ENCODE measurements at regions of chr5 and their contacts with region 1.

Region 1: DNA sequence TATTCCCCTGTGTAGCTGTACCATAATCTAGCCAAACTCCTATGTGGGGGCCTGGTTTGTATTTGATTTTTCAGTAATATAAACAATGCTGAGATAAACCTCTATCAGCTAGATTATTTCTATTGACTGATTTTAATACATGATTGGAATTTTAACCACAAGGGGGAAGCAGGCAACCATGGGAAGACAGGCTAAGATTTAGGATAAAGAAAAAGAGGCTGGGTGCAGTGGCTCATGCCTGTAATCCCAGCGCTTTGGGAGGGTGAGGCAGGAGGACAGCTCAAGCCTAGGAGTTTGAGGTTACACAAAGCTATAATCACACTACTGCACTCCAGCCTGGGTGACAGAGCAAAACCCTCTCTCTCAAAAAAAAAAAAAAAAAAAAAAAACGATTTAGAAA is 18.1 kb upstream of the GPX3 start:
- DNase-seq: no peak
- H3K4me3 ChIP-seq: no peak overlapping the region
- H3K27ac ChIP-seq: no peak overlapping the region
- H3K4me1 ChIP-seq: peaks cover 10% of the 10 kb centered on the region
- H3K27me3 ChIP-seq: no peaks in the 10 kb centered on the region
- CTCF ChIP-seq: peak; percentile 51 to 82 (median 64)
- POLR2A ChIP-seq: no peak

Region 2: GRCh38 chr5:150778517-150779396 is 223.5 kb before region 1 on chr5 and contains the start of gene SMIM3:
- intact Hi-C with region 1: loop called (anchors 10 kb)
- DNase-seq: peak; percentile 73
- H3K4me3 ChIP-seq: peak within 1 kb of the TSS; percentile 66 to 68
- H3K27ac ChIP-seq: peak within 1 kb of the TSS; percentile 86 to 88
- H3K4me1 ChIP-seq: peaks cover 10% of the 10 kb centered on the region
- H3K27me3 ChIP-seq: no peaks in the 10 kb centered on the region
- CTCF ChIP-seq: peak in 3 of 4 experiments; percentile 23 to 52 (median 43)
- POLR2A ChIP-seq: peak; percentile 72
- total RNA-seq, gene SMIM3: 21.2 to 26.5 TPM

Region 3: GRCh38 chr5:150960791-150961396 is 41.4 kb before region 1 on chr5:
- intact Hi-C with region 1: no loop called
- DNase-seq: no peak
- H3K4me3 ChIP-seq: no peak overlapping the region
- H3K27ac ChIP-seq: no peak overlapping the region
- H3K4me1 ChIP-seq: no peaks in the 10 kb centered on the region
- H3K27me3 ChIP-seq: no peaks in the 10 kb centered on the region
- CTCF ChIP-seq: no peak
- POLR2A ChIP-seq: no peak

Region 4: GRCh38 chr5:151023651-151024050 is 21.4 kb after region 1 on chr5:
- intact Hi-C with region 1: loop called (anchors 2 kb)
- DNase-seq: peak; percentile 75
- H3K4me3 ChIP-seq: no peak overlapping the region
- H3K27ac ChIP-seq: peak overlapping the region; percentile 84 to 86
- H3K4me1 ChIP-seq: peaks cover 16% of the 10 kb centered on the region
- H3K27me3 ChIP-seq: no peaks in the 10 kb centered on the region
- CTCF ChIP-seq: no peak
- POLR2A ChIP-seq: no peak

Region 5: DNA sequence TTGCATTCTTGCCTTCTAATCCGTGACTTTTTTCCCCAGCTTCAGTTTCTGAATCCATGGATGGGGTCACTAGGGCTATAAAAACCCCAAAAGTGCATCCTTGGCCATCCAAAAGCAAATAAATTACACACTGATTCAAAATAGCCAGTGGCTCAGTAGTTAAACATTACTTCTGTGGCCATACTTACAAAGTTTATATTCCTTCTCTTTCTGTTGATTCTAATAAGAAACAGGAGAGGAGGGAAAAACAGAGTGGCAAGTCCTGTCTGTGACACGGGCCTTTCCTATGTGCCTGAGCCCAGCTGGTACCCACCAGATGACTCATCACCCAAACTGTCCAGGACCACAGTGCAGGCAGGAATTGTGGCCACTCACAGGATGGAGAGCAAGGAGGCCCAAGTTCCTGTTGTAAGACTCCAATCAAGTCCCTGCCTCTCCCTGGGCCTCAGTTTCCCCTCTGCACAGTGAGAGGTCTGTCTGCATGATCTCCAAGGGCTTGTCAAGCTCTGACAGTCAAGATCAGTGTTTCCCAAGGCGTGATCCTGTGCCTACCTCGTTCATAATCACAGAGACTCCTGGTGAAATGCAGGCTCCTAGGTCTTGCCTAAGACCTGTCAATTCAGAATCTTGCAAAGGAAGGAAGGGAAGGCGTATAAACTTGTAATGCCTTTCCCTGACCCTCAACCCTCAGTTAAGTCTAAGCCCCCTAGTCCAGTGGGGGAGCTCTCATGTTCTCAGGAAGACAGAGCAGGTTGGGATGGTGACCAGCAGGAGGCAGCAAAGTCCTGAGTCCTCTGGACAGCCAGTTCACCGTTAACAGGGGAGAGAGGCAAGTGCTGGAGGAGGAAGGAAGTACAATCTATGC is 49.0 kb after region 1 on chr5:
- intact Hi-C with region 1: loop called (anchors 2 kb)
- DNase-seq: peak; percentile 68
- H3K4me3 ChIP-seq: no peak overlapping the region
- H3K27ac ChIP-seq: no peak overlapping the region
- H3K4me1 ChIP-seq: no peaks in the 10 kb centered on the region
- H3K27me3 ChIP-seq: no peaks in the 10 kb centered on the region
- CTCF ChIP-seq: peak; percentile 54 to 88 (median 79)
- POLR2A ChIP-seq: no peak

Region 6: GRCh38 chr5:151107738-151108508 is 105.7 kb after region 1 on chr5:
- intact Hi-C with region 1: loop called (anchors 5 kb)
- DNase-seq: peak; percentile 52
- H3K4me3 ChIP-seq: no peak overlapping the region
- H3K27ac ChIP-seq: peak overlapping the region in 1 of 2 donors; percentile 31
- H3K4me1 ChIP-seq: no peaks in the 10 kb centered on the region
- H3K27me3 ChIP-seq: no peaks in the 10 kb centered on the region
- CTCF ChIP-seq: no peak
- POLR2A ChIP-seq: no peak

Region 7: DNA sequence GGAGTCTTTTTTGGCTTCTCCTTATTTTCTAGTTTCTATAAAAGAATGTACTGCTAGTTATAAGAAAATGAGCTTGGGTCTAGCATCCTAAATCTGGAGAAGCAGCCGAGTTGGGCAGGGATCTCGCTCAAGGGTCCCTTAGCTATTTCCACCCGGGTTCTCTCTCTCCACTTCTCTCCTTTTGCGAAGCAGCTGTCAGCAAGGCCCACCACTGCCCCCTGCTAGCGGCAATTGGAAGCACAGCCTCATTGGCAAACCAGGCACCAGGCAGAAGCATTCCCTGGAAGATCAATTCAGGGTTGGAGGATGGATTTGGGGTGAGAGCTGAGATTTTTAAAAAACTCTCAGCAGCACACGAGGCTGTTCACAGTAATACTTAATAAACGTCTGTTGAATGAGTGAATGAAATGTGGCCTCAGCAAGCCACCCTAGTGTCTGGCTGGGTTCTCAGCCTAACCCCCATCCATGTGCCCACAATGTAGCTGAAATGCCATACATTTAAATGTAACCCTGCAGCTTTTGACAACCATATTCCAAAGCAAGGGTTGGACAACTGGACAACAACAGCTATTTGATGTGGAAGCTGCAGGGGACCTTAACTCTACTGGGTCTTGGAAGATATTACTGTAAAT is 113.1 kb after region 1 on chr5:
- intact Hi-C with region 1: loop called (anchors 5 kb)
- DNase-seq: peak; percentile 61
- H3K4me3 ChIP-seq: no peak overlapping the region
- H3K27ac ChIP-seq: no peak overlapping the region
- H3K4me1 ChIP-seq: no peaks in the 10 kb centered on the region
- H3K27me3 ChIP-seq: no peaks in the 10 kb centered on the region
- CTCF ChIP-seq: peak; percentile 72 to 93 (median 82)
- POLR2A ChIP-seq: no peak

Region 8: DNA sequence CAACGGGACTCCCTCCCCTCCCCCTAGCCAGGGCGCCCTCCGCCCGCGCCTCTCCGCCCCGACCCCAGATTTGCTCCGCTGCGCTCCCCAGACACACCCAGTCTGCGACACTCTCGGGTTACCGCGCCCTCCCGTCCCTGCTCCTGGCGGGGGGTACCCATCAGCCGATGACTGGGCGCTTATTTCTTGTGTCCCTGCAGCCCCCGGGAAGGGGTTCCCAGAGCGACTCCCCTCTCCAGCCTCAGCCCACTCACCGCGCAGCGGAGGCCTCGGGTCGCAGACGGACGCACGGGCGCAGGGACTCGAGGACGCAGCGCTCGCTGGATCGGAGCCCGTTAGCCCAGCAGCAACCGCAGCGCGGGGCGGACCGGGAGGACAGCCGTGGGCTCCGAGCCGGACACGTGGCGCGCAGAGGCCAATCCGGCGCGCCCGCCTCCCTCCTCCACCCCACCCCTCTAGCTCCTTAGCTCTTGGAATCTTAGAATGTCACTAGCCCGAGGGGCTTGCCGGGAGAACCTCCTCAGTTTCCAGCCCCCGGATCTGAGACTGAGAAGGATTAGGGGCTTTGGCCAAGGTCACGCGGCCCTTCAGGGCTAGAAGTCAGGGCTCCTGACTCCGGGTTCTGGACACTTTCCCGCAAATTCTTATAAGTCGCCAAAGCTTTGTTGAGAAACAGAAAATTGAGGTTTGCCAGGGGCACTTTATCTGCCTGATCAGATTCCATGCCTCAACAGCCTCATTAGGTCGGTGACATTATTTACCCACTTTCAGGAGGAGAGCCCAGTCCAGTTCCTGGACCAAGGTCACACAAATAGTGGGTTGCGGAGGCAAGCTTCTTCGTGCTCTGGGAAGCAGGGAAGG is 155.4 kb after region 1 on chr5 and contains the start of gene ANXA6:
- intact Hi-C with region 1: loop called (anchors 5 kb)
- DNase-seq: peak; percentile 84
- H3K4me3 ChIP-seq: peak within 1 kb of the TSS; percentile 57 to 63
- H3K27ac ChIP-seq: peak within 1 kb of the TSS; percentile 78 to 82
- H3K4me1 ChIP-seq: no peaks in the 10 kb centered on the region
- H3K27me3 ChIP-seq: no peaks in the 10 kb centered on the region
- CTCF ChIP-seq: peak in 1 of 4 experiments; percentile 6
- POLR2A ChIP-seq: peak; percentile 61
- total RNA-seq, gene ANXA6: 85.7 to 184 TPM